ENCODE measurements at regions of chr10 and their contacts with region 1.

Region 1: GRCh38 chr10:68208424-68209042 is 23.4 kb downstream of the ATOH7 start:
- DNase-seq: peak in 8 of 10 donors; percentile 26 to 92 (median 58)

Region 2: DNA sequence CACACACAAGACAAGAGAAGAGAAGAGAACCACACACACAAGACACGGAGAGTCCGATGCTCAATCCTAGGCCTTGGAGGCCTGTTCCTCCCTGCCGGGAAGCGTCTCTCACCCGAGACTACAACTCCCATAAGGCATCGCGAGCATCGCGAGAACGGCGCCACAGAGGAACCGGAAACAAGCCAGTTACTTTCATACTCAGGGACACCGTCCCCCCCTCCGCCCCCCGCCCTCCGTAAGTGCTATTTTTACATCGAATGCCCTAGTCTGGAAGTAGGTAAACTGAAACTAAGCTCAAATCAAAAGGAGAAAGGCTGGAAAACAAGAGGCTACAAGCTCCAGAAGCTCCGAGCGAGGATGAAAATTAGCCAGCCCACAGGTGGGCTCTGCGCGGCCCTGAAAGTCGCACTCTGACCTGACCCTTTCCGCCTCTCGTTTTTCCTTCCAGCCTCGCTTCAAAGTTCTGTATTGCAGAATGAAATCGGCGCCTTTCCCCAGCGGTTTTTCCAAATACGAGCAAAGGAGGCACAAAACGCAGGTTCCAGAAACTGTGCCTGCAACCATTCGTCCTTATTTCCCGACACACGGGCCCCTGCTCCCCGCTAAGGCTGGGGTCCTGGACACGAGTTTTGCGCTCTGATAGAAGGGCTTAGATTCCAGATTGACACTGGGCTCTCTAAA is 359.1 kb before region 1 on chr10:
- intact Hi-C with region 1: loop called (anchors 5 kb)
- DNase-seq: peak; percentile 92 to 99 (median 97)

Region 3: GRCh38 chr10:68082872-68083271 is 125.7 kb before region 1 on chr10:
- intact Hi-C with region 1: loop called (anchors 5 kb)
- DNase-seq: no peak

Region 4: DNA sequence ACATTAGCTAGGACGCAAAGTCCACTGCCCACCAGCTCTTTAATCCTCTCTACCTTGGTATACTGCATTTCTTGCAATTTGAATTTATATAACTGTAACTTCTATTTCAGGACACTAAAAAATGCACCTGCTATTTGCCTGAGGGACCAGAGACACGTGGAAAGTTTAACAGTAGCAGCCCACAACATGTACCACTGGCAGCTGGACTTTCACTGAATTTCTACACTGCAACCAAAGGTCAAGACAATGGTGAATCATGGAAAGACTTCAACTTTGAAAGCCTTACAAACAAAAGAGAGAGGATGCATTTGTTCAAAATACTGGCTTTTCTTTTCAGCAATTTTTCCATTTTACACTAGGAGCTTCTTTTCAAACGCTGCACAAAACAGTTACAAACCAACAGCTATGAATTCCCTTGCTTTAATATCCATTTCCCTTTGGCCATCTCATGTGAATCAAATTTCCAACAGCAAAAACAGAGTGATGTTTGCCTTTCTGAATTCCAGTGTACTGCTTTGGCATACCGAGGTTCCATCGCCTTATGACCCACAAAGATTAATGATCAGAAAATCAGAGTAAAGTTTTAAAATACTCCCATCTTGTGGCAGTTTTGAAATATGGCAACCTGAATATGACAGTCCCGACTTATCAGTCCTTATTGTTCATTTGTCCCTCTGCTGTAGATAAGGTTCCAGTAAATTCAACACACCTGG is 93.4 kb after region 1 on chr10:
- intact Hi-C with region 1: loop called (anchors 5 kb)
- DNase-seq: no peak

Measured in posterior cingulate gyrus (tissue), 11 donors.